ENCODE measurements at regions of chr2 and their contacts with region 1.

Region 1: DNA sequence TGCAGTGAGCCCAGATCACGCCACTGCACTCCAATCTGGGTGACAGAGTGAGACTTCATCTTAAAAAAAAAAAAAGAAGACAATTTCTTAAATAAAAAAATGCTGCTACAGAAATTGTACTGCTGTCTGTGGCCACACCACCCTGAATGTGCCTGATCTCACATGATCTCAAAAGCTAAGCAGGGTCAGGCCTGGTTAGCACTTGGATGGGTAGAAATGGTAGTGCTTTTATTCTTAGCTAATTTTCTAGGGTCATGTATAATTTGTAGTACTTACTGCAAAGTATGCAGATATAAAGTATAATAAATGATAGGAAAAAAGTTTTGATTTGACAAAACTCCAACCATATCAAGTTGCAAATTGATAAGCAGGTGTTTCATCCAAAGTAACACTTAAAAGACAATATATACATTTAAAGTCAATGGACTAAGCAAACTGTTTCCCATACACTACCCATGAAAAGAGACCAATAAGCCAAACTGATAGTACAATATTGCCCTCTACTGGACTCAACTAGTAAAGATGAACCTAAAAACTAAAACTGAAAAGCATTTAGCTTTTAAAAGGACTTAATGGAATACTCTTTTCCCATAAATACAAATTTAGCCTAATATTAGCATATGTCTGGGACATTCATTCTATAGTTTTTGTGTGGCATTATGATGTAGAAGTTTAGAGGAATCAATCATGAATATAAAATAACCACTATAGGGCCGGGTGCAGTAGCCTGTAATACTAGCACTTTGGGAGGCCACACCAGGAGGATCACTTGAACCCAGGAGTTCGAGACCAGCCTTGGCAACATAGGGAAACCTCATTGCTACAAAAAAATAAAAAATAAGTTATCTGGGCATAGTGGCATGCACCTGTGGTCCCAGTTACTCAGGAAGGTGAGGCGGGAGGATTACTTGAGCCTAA is 18.6 kb upstream of the PEX13 start:
- DNase-seq: no peak
- ATAC-seq: no peak
- H3K4me3 ChIP-seq: no peak overlapping the region
- H3K27ac ChIP-seq: no peak overlapping the region
- H3K4me1 ChIP-seq: no peaks in the 10 kb centered on the region
- H3K27me3 ChIP-seq: no peaks in the 10 kb centered on the region

Region 2: DNA sequence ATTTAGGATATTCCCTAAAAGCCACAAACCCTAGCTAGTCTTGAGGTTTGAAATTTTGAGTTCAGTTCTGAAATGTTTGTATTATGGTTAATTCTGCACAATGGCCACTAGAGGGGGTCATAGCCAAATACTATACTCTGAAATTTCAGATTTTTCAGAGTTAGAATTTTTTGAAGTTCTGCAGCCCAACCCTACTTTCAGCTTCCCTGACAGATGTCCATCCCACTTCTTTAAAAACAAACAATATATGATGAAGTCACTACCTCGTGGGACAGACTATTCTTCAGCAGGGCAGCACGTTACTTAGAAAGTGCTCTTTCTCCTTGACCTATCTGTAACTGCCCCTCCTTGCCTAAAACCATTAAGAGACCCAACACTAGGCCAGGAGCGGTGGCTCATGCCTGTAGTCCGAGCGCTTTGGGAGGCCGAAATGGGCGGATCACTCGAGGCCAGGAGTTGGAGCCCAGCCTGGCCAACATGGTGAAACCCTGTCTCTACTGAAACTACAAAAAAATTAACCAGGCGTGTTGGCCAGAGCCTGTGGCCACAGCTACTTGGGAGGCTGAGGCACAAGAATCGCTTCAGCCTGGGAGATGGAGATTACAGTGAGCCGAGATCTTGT is 291.0 kb before region 1 on chr2:
- intact Hi-C with region 1: loop called (anchors 5 to 10 kb)
- DNase-seq: peak in 1 of 3 donors; percentile 62
- ATAC-seq: peak; percentile 40 to 43
- H3K4me3 ChIP-seq: no peak overlapping the region
- H3K27ac ChIP-seq: no peak overlapping the region
- H3K4me1 ChIP-seq: no peaks in the 10 kb centered on the region
- H3K27me3 ChIP-seq: no peaks in the 10 kb centered on the region

Region 3: DNA sequence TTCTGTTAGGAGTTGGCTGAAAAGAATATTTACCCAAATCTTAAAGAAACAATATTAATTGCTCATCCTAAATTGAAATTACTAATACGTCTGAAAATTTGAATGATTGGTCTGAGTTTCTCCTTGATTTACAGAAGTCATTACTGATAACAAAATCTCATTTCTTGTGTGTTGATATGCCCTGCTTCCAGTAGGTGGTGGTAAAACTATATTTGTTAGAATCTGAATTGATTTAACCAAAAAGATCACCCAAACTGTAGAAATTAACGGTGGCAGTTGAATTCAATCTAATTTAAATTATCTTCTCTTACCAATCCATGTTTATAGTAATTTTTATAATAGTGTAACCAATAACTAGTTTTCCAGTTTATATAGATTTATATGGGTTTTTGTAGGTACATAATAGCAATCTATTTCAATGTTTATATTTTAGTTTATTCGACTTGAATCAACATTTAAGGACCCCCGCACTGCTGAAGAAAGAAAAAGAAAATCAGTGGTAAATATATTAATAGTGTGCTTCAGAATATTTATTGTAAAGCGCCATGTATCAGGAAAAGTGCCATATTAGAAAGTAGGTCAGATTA is 204.5 kb before region 1 on chr2:
- intact Hi-C with region 1: loop called in 1 of 4 experiments (anchors 10 kb)
- DNase-seq: no peak
- ATAC-seq: no peak
- H3K4me3 ChIP-seq: no peak overlapping the region
- H3K27ac ChIP-seq: no peak overlapping the region
- H3K4me1 ChIP-seq: no peaks in the 10 kb centered on the region
- H3K27me3 ChIP-seq: no peaks in the 10 kb centered on the region

Region 4: DNA sequence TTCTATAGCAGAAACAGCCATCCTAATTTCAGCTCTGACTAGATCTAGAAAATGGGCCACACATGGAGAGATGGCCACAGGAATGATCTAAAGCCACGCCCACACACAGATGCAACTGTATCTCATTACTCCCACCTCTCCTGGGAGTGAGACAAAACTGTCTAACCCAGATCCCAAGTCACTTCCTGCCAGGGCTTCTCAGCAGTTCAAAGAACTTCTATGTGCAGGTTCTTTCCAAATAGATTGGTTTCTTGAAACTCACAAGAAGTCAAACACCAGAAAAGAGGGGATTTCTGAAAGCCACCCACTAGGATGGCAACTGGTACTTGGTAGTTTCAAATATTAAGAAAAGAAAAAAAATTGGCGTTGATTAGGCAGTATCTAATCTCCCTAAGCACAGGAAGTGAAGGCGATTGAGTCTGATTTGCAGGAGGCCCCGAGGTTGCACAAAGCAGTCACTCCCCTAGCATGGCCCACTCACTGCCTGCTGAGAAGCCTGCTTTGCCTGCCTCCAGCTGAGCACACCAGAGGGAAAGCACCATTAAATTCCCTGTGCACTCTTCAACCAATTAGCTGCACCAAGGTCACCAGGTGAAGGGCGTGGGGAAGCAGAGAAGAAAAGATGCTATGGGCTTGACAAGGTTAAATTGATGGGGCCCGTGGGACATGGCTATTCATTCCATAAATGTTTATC is 191.8 kb before region 1 on chr2:
- intact Hi-C with region 1: loop called in 1 of 4 experiments (anchors 10 kb)
- DNase-seq: no peak
- ATAC-seq: no peak
- H3K4me3 ChIP-seq: no peak overlapping the region
- H3K27ac ChIP-seq: no peak overlapping the region
- H3K4me1 ChIP-seq: peaks cover 2% of the 10 kb centered on the region
- H3K27me3 ChIP-seq: no peaks in the 10 kb centered on the region

Region 5: GRCh38 chr2:61354543-61355197 is 355.8 kb after region 1 on chr2:
- intact Hi-C with region 1: no loop called
- DNase-seq: no peak
- ATAC-seq: no peak
- H3K4me3 ChIP-seq: no peak overlapping the region
- H3K27ac ChIP-seq: no peak overlapping the region
- H3K4me1 ChIP-seq: peaks cover 2% of the 10 kb centered on the region
- H3K27me3 ChIP-seq: no peaks in the 10 kb centered on the region

Measured in right cardiac atrium (tissue), 5 donors.